ENCODE measurements at regions of chr2 and their contacts with region 1.

Region 1: GRCh38 chr2:68467077-68467960 is at the starts of genes APLF and FBXO48:
- DNase-seq: peak; percentile 96
- ATAC-seq: peak; percentile 94
- H3K4me3 Mint-ChIP-seq: peak within 1 kb of the TSS; percentile 98
- H3K27ac Mint-ChIP-seq: peak within 1 kb of the TSS; percentile 93
- H3K4me1 Mint-ChIP-seq: peaks cover 29% of the 10 kb centered on the region
- H3K27me3 Mint-ChIP-seq: no peaks in the 10 kb centered on the region
- CTCF ChIP-seq: no peak
- total RNA-seq, gene APLF: 6.4 and 6.8 TPM in 2 replicates
- total RNA-seq, gene FBXO48: 1.8 and 2.6 TPM in 2 replicates

Region 2: DNA sequence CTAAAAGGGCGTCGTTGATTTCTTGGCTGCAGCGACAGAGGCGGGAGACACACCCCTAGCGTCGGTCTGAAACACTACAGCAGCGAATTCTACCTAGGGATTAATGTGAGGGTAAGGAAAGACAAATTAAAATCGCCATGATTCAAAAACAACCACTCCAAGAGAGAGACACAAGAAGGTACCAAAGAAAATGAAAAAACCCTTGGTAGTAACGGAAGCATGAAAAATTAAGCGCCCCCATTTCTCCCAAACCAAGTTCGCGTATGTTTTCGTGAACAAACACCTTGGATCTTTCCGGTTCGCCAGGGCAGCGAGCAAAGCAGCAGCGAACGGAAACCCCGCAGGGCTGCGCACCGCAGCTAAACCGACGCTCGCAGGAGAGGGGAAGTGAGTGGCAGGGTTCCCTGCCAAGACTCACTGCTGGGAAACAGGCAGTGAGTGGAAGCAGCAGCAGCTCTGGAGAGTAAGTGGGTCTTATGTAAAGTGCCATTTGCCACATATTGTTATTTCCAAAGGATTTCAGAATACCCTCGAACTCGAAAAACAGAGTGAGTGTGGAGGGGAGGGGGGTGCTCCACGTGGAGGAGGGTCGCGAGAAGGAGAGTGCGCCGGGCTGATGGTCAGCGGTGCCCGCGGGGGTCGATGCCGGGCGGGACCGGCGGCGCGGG is 216.0 kb before region 1 on chr2:
- CTCF ChIA-PET with region 1: no interaction called
- POLR2A ChIA-PET with region 1: no interaction called
- intact Hi-C with region 1: loop called (anchors 1 kb)
- DNase-seq: peak; percentile 41
- ATAC-seq: peak; percentile 66
- H3K4me3 Mint-ChIP-seq: peak overlapping the region; percentile 89
- H3K27ac Mint-ChIP-seq: peak overlapping the region; percentile 92
- H3K4me1 Mint-ChIP-seq: peaks cover 35% of the 10 kb centered on the region
- H3K27me3 Mint-ChIP-seq: no peaks in the 10 kb centered on the region
- CTCF ChIP-seq: no peak

Region 3: GRCh38 chr2:68689553-68690537 is 222.5 kb after region 1 on chr2:
- CTCF ChIA-PET with region 1: interaction called, 6 read pairs
- POLR2A ChIA-PET with region 1: no interaction called
- intact Hi-C with region 1: loop called (anchors 1 kb)
- DNase-seq: no peak
- ATAC-seq: peak; percentile 79
- H3K4me3 Mint-ChIP-seq: peak overlapping the region; percentile 59
- H3K27ac Mint-ChIP-seq: peak overlapping the region; percentile 91
- H3K4me1 Mint-ChIP-seq: peaks cover 40% of the 10 kb centered on the region
- H3K27me3 Mint-ChIP-seq: no peaks in the 10 kb centered on the region
- CTCF ChIP-seq: no peak

Region 4: DNA sequence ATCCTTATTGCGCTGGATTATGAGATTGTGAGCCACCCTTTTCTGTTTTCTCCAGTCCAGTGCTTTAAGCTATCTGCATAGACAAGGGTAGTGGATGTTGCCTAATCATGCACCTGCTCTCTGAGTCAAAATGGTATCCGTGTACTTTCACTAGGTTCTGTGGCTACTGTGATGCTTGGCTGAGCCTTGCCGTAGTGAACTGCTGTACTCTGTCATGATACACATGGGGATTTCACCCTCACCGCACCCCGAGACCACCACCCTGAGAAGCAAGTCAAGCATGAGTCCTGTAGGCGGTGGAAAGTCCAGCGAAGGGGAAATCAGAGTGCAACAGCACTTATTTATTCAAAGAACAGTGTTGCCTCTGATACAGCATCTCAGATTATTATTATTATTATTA is 322.3 kb after region 1 on chr2:
- CTCF ChIA-PET with region 1: interaction called, 3 read pairs
- POLR2A ChIA-PET with region 1: interaction called, 10 read pairs
- intact Hi-C with region 1: no loop called
- DNase-seq: peak; percentile 75
- ATAC-seq: peak; percentile 87
- H3K4me3 Mint-ChIP-seq: peak overlapping the region; percentile 61
- H3K27ac Mint-ChIP-seq: no peak overlapping the region
- H3K4me1 Mint-ChIP-seq: peaks cover 47% of the 10 kb centered on the region
- H3K27me3 Mint-ChIP-seq: no peaks in the 10 kb centered on the region
- CTCF ChIP-seq: no peak

Region 5: DNA sequence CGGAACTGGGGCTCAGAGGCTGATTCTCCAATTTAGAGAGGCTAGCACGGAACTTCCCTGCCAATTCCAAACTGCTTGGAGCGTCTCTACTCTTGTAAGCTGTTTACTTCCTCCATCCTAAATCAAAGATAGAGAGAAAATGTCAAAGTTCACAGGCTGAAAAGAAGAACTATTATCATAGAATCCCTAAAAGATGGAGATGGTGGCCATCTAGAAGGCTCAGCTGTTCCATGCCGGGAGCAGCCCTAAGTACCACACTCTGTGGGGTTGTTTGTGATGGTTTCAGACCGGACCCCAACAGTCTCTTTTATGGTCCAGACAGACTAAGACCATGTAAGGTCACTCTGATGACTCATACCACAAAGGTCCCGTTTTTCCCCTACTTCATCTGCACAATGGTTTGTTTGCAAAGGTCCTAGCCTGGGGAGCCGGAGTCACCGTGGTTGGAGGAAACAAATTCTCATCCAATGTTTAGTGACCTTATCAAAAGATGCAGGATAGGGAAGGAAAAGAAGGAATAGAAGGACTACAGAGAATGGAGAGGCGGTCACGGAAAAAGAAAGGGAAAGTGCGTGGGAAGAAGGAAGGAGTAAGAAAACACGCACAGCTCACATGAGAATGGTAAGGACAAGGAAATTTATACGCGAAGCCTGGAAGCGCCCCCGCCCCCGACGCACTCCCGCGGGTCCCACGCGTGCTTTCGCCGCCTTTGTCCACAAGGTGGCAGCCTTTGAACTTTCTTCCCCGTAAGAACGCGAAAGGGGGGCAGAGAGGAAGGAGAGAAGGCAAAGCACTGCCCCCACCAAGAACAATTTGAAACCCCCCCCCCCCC is 545.2 kb after region 1 on chr2:
- CTCF ChIA-PET with region 1: no interaction called
- POLR2A ChIA-PET with region 1: no interaction called
- intact Hi-C with region 1: loop called (anchors 5 kb)
- DNase-seq: peak; percentile 33
- ATAC-seq: peak; percentile 58
- H3K4me3 Mint-ChIP-seq: peak overlapping the region; percentile 64
- H3K27ac Mint-ChIP-seq: no peak overlapping the region
- H3K4me1 Mint-ChIP-seq: peaks cover 14% of the 10 kb centered on the region
- H3K27me3 Mint-ChIP-seq: peaks cover 55% of the 10 kb centered on the region
- CTCF ChIP-seq: no peak

Region 6: DNA sequence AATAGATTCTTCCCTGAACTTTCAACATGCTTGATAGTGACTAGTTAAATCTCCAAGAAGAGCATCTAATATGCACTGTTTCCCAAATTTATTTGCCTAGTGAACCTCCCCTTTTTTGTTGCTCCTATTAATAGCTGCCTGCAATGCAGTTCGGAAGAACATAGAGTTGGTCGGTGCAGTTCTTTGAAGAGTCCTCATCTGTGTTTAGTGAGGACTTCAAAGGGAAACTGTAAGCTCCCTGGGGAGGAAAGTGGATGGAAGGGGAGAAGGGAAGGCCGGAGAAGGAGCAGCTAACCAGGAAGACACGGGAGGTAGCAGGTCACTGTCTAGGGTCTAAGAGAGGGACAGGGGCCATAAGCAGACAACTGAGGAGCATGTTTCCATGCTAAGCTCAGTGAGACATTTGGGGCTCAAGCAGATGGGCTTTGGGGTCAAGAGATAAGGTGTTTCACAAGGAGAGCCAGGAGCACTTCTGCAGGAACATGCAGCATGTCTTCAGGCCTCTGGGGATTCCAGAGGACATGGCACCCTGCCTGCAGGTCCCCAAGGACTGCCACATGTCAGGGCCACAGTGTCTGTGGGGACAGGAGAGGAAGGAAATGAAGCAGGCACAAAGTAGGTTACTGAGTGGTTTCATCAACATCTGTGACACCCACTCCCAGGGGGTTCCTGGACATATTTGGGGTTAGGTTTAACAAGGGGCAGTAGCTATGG is 1225.9 kb after region 1 on chr2:
- CTCF ChIA-PET with region 1: no interaction called
- POLR2A ChIA-PET with region 1: interaction called, 12 read pairs
- intact Hi-C with region 1: no loop called
- DNase-seq: peak; percentile 54
- ATAC-seq: peak; percentile 94
- H3K4me3 Mint-ChIP-seq: peak overlapping the region; percentile 33
- H3K27ac Mint-ChIP-seq: peak overlapping the region; percentile 57
- H3K4me1 Mint-ChIP-seq: peaks cover 28% of the 10 kb centered on the region
- H3K27me3 Mint-ChIP-seq: peaks cover 41% of the 10 kb centered on the region
- CTCF ChIP-seq: no peak

Measured in activated B cell treated with CpG ODN at 0.5 μM for 24 hours (primary cell).